Posterior vena cava (tissue), 2 donors: ENCODE measurements at regions of chr13 and their contacts with region 1.

Region 1: DNA sequence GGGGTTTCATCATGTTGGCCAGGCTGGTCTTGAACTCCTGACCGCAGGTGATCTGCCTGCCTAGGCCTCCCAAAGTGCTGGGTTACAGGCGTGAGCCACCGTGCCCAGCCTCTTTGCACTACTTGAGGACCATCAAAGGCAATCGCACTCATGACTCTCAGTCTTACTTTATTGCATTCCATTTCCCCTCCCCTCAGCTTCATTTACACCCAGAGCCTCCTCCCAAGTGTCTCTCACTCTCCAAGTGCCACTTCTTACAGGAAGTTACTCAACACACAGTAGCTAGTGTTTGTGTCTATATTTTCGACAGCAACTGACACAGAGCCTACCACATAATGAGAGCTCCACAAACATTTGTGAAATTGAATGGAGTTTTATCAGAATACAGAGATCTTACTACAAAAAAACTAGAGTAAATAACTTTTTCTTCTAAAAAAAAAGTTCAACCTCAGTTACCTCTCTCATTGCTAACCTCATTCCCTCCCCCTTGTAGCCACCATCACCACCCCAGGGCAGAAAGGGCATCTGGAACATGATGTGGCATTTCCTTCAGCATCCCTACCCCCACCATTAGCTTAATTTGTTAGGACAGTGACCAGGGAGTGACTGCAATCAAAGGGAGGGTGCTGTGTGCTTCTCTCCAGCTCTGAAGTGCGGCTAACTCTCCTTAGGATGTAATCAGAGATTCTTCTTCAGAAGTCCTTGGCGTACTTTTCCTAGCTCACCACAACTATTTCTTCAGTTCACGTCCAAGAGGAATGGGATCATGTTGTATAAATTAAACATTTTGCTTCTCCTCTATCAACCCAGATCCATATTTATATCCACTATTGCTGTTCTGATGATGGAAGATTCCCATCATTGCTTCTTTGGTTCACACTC is 17.0 kb upstream of the RUBCNL start:
- DNase-seq: no peak

Region 2: DNA sequence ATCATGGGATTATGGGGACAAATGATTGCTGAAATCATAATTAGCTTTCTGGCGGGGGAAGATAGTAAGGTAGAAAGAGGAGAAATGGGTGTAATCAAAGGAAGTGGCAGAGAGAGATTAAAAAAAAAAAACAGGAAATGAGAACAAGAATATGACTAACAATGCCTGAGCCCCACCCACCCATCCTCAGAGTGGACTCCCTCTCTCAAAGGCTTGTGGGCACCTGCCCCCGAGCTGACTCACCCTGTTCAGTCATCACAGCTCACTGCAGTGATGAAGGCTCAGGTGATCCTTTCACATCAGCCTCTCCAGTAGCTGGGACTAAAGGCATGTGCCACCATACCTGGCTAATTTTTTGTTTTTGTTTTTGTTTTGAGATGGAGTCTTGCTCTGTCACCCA is 1036.7 kb before region 1 on chr13:
- intact Hi-C with region 1: loop called in 1 of 2 experiments (anchors 5 kb)
- DNase-seq: peak; percentile 85

Region 3: DNA sequence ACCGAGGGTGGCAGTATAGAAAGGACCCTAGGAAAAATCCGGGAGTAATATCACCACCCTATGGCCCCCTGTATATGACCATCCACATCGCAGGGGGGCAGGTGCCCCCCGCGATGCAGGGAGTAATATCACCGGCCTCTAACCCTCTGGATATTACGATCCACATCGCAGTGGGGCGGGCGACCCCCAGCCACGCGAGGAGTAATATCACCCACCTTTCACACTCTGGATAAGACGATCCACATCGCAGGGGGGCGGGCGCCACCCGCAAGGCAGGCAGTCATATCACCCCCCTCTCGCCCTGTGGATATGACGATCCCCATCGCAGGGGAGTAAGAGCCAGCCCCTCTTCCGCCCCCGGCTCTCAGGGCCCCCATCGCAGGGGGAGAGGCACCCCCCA is 59.6 kb after region 1 on chr13:
- intact Hi-C with region 1: no loop called
- DNase-seq: peak; percentile 70